ENCODE measurements at regions of chr2 and their contacts with region 1.

Region 1: DNA sequence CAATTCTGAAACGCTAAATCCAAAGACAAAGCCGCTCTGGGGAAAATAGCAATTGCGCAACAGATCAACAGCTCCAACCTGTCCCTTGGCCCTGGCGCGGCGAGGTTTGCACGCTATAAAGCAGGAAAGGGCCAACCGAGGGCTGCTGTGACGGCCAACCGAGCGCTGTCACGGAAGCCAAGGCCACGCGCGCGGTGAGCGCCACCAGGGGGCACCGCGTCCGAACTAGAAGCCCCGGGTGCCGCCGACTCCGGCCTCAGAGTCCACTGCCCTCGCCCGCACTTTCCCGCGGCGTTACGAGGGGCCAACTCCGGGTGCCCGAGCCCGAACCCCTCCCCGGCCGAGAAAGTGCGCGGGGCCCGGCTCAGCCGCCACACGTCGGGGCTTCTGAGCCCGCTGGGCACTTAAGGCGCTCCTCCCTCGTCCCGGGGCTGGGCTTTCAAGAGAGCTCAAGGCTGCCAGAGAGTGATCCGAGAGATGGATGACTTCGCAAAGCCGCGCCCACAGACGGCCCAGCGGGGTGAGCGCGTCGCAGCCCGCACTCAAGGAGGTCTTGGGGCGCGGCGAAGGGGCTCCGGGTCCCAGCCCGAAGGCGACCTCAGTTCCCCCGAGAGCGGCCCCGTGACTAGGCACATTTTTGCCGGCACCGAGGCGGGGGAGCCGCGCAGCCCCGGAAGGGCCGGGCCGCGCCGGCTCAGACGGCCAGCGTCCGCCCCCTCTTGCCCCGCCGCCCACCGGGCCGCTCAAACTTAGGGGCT is 897 bp downstream of the NFE2L2 start:
- DNase-seq: peak; percentile 98 to 99
- ATAC-seq: peak; percentile 71
- H3K4me3 ChIP-seq: peak overlapping the region; percentile 86 to 99 (median 96)
- H3K27ac ChIP-seq: peak overlapping the region; percentile 99 to 100 (median 100)
- H3K4me1 ChIP-seq: peaks cover 54% of the 10 kb centered on the region in 2 donors
- H3K27me3 ChIP-seq: no peaks in the 10 kb centered on the region
- CTCF ChIP-seq: peak; percentile 86 to 98 (median 92)
- POLR2A ChIP-seq: peak; percentile 69 to 85

Region 2: GRCh38 chr2:177212106-177212890 is 51.3 kb before region 1 on chr2 and contains the start of gene HNRNPA3:
- in situ Hi-C with region 1: loop called in 3 of 4 experiments (anchors 5 to 10 kb)
- intact Hi-C with region 1: loop called (anchors 1 kb)
- DNase-seq: peak; percentile 98 to 99
- ATAC-seq: peak; percentile 90 to 92
- H3K4me3 ChIP-seq: peak within 1 kb of the TSS; percentile 75 to 92 (median 82)
- H3K27ac ChIP-seq: peak within 1 kb of the TSS; percentile 95 to 100 (median 98)
- H3K4me1 ChIP-seq: peaks cover 46 to 48% of the 10 kb centered on the region in 2 donors
- H3K27me3 ChIP-seq: no peaks in the 10 kb centered on the region
- CTCF ChIP-seq: peak; percentile 10 to 50 (median 47)
- POLR2A ChIP-seq: peak; percentile 91 to 96
- total RNA-seq, gene HNRNPA3: 16.1 to 32.2 (median 22.4) TPM

Region 3: GRCh38 chr2:177252808-177253531 is 10.7 kb before region 1 on chr2:
- in situ Hi-C with region 1: no loop called
- intact Hi-C with region 1: loop called (anchors 1 kb)
- DNase-seq: no peak
- ATAC-seq: no peak
- H3K4me3 ChIP-seq: peak overlapping the region in 1 of 4 donors; percentile 14
- H3K27ac ChIP-seq: peak overlapping the region; percentile 82 to 87 (median 82)
- H3K4me1 ChIP-seq: peaks cover 94 to 99% of the 10 kb centered on the region in 2 donors
- H3K27me3 ChIP-seq: no peaks in the 10 kb centered on the region
- CTCF ChIP-seq: no peak
- POLR2A ChIP-seq: no peak

Region 4: DNA sequence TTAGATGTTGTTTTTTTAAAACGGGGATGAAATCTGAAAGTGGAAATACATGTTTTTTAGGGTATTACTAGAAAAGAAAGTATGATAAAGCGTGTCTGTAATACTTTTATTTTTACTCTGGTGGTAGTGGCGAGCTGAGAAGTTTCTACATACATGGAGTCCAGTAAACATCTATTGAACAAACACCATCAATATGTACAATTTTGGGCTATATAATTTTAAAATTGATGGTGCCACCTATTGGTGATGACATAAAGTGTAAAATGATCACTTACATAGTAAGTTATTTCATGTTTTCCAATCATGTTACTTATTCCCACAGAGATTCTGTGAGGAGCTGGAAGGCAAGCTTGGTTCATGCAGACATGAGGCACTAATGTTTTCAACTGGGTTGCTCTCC is 32.4 kb after region 1 on chr2:
- in situ Hi-C with region 1: no loop called
- intact Hi-C with region 1: loop called (anchors 2 kb)
- DNase-seq: no peak
- ATAC-seq: peak in 1 of 2 donors; percentile 26
- H3K4me3 ChIP-seq: no peak overlapping the region
- H3K27ac ChIP-seq: peak overlapping the region in 2 of 4 donors; percentile 35 to 41
- H3K4me1 ChIP-seq: peaks cover 0 to 3% of the 10 kb centered on the region in 2 donors
- H3K27me3 ChIP-seq: no peaks in the 10 kb centered on the region
- CTCF ChIP-seq: peak in 3 of 5 experiments; percentile 10 to 50 (median 32)
- POLR2A ChIP-seq: no peak

Region 5: DNA sequence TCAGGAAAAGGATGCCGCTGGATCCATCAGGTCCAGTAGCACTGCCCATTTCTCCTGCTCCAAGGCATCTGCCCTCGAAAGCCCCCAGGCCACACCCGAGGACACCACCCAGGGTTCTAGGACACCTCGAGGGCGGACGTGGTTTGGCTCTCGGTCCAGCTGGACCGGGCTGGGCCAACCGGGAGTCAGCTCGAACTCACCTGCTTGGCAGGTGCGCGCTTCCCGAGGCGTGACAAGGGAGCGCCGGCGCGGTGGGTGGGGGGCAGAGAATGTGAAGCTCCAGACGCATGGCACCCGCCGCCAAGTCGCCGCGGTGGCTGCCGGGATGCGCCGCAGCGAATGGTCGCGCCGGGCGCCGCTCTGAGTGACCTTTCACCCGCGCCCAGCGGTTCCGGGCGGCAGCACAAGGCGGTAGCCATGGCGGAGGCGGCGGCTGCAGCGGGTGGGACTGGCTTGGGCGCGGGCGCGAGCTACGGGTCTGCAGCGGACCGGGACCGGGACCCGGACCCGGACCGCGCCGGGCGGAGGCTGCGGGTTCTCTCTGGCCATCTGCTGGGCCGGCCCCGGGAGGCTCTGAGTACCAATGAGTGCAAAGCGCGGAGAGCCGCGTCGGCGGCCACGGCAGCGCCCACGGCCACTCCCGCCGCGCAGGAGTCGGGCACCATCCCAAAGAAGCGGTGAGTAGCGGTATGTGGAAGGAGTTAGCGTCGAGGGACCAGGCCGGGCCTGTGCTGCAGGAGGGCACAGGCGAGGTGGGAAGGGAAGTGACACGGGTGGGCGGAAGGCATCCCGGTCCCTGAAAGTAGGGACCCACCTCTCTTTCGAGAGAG is 129.0 kb after region 1 on chr2 and contains the start of gene AGPS:
- in situ Hi-C with region 1: no loop called
- intact Hi-C with region 1: loop called (anchors 10 kb)
- DNase-seq: peak; percentile 56 to 73
- ATAC-seq: peak; percentile 89 to 90
- H3K4me3 ChIP-seq: peak within 1 kb of the TSS; percentile 82 to 95 (median 89)
- H3K27ac ChIP-seq: peak within 1 kb of the TSS; percentile 76 to 87 (median 82)
- H3K4me1 ChIP-seq: peaks cover 25 to 37% of the 10 kb centered on the region in 2 donors
- H3K27me3 ChIP-seq: no peaks in the 10 kb centered on the region
- CTCF ChIP-seq: peak in 4 of 5 experiments; percentile 28 to 51 (median 40)
- POLR2A ChIP-seq: peak in 1 of 2 donors; percentile 51
- total RNA-seq, gene AGPS: 23.1 to 30.9 (median 26.2) TPM

Region 6: GRCh38 chr2:177460973-177461585 is 197.4 kb after region 1 on chr2:
- in situ Hi-C with region 1: no loop called
- intact Hi-C with region 1: no loop called
- DNase-seq: no peak
- ATAC-seq: no peak
- H3K4me3 ChIP-seq: no peak overlapping the region
- H3K27ac ChIP-seq: no peak overlapping the region
- H3K4me1 ChIP-seq: no peaks in the 10 kb centered on the region
- H3K27me3 ChIP-seq: no peaks in the 10 kb centered on the region
- CTCF ChIP-seq: no peak
- POLR2A ChIP-seq: no peak

Measured in gastrocnemius medialis (tissue), 4 donors.